ENCODE measurements at regions of chr9 and their contacts with region 1.

Region 1: DNA sequence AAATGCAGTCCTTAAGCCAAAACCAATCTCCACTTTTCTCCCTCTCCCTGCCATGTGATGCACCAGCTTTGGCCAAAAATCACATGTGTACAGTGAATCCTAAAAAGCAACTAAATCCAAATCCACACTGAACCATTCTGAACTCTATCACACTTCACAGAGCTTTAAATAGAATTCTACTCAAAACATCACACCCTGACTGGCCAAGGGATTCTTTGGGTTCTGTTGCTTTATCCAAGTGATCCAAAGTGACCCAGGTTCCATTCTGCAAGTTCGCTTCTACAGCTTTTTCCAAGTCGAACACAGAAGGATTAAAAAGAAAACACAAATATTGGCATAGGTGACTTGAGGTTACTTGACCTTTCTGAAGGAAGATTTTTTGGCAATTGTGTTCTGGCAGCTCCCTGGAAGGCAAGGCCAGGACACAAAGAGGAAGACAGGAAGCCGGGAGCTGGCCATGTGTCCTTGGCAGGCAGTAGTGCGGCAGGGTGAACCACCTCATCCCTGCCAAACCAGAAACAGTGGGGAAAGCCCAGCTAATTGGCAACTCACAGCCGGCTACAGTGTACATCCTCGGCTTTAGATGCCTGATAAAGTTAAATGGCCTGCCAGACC is 115.0 kb downstream of the NFIB start:
- DNase-seq: no peak

Region 2: GRCh38 chr9:14277244-14277643 is 78.3 kb after region 1 on chr9:
- in situ Hi-C with region 1: loop called (anchors 25 kb)
- DNase-seq: no peak

Measured in KBM-7 (cell line).